Activated CD4-positive, alpha-beta T cell treated with anti-CD3 and anti-CD28 coated beads, Interleukin-2, amount 10 ng/mL, durations not matched to agents 24 days and 14 days (primary cell): ENCODE measurements at regions of chr15 and their contacts with region 1.

Region 1: GRCh38 chr15:81400640-81401236 is 26.7 kb upstream of the TMC3 start:
- DNase-seq: peak; percentile 77
- H3K4me3 Mint-ChIP-seq: no peak overlapping the region
- H3K27ac Mint-ChIP-seq: no peak overlapping the region
- H3K4me1 Mint-ChIP-seq: peaks cover 2% of the 10 kb centered on the region
- H3K27me3 Mint-ChIP-seq: peaks cover 16% of the 10 kb centered on the region

Region 2: GRCh38 chr15:81106560-81106959 is 294.2 kb before region 1 on chr15:
- intact Hi-C with region 1: loop called (anchors 5 kb)
- DNase-seq: peak; percentile 84
- H3K4me3 Mint-ChIP-seq: no peak overlapping the region
- H3K27ac Mint-ChIP-seq: no peak overlapping the region
- H3K4me1 Mint-ChIP-seq: peaks cover 12% of the 10 kb centered on the region
- H3K27me3 Mint-ChIP-seq: peaks cover 38% of the 10 kb centered on the region

Region 3: GRCh38 chr15:81377871-81378270 is 22.9 kb before region 1 on chr15:
- intact Hi-C with region 1: loop called (anchors 2 kb)
- DNase-seq: no peak
- H3K4me3 Mint-ChIP-seq: no peak overlapping the region
- H3K27ac Mint-ChIP-seq: no peak overlapping the region
- H3K4me1 Mint-ChIP-seq: peaks cover 3% of the 10 kb centered on the region
- H3K27me3 Mint-ChIP-seq: peaks cover 8% of the 10 kb centered on the region

Region 4: DNA sequence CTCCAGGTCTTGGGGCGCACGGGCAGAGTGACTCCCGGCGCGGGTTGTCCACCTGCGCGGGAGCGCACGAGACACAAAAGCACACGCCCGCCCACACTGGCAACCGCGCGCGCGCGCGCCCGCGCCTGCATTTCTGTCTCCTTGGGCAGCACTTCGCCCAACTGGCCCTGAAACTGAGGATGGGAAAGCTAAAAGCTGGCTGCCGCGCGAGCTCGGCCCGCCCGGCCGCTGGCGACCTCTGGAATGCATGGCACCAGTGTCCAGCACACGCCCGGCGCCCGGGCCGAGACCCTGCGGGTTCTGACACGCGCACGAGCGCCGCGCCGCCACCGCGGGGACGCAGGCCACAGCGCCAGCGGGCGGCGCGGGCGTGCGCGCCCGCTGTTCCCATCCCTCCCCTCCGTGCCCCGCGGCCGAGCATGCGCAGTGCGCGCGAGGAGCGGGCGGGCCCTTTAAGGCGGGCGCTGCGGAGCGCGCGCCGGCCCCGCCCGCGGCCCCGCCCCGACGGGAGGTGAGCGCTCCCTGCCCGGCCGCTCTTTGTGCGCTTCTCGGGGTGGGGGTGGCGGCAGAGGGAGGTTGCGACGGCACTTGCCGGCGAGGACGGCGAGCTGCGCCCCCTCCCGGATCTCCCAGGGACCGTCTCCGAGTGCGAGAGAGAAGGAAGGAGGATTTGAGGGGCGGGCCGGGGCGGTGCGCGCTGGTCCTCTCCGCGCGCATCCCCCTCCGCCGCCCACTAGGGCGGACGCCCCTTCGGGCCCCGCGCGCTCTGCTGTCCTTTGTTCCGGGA is 646.1 kb after region 1 on chr15:
- intact Hi-C with region 1: no loop called
- DNase-seq: peak; percentile 96
- H3K4me3 Mint-ChIP-seq: peak overlapping the region; percentile 91
- H3K27ac Mint-ChIP-seq: peak overlapping the region; percentile 89
- H3K4me1 Mint-ChIP-seq: peaks cover 17% of the 10 kb centered on the region
- H3K27me3 Mint-ChIP-seq: peaks cover 32% of the 10 kb centered on the region